ENCODE measurements at regions of chr2 and their contacts with region 1.

Region 1: DNA sequence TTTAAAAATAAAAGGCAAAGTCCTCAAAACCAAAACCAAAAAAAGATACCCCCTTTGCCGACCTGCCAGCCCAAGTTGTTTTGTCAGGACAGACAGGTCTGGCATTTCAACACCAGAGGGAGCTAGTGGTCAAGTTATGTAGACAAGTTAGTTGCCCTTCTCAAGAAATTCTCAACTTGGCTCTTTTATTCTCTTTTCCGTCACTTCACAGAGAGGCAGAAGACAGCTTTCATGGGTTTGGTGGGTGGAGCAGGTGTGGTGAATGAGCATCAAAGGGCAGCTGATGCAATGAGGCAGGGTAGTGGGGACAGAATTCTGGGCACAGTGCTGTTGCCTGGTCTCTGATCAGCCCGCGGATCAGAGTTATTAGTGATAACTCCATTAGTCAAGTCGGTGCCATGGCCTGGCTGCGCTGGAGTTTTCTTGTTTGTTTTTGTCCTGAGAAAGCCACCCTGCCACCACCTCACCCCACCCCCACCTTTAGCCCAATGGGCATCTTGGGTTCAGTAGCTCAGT is 303.7 kb upstream of the EPAS1 start:
- DNase-seq: peak; percentile 89
- ATAC-seq: peak; percentile 73
- H3K4me3 ChIP-seq: no peak overlapping the region
- H3K27ac ChIP-seq: peak overlapping the region; percentile 8; the same call in 1 of the 2 replicates
- H3K4me1 ChIP-seq: peaks cover 19% of the 10 kb centered on the region
- H3K27me3 ChIP-seq: no peaks in the 10 kb centered on the region
- CTCF ChIP-seq: peak; percentile 85
- POLR2A ChIP-seq: no peak
- RAD21 ChIP-seq: peak; percentile 92

Region 2: DNA sequence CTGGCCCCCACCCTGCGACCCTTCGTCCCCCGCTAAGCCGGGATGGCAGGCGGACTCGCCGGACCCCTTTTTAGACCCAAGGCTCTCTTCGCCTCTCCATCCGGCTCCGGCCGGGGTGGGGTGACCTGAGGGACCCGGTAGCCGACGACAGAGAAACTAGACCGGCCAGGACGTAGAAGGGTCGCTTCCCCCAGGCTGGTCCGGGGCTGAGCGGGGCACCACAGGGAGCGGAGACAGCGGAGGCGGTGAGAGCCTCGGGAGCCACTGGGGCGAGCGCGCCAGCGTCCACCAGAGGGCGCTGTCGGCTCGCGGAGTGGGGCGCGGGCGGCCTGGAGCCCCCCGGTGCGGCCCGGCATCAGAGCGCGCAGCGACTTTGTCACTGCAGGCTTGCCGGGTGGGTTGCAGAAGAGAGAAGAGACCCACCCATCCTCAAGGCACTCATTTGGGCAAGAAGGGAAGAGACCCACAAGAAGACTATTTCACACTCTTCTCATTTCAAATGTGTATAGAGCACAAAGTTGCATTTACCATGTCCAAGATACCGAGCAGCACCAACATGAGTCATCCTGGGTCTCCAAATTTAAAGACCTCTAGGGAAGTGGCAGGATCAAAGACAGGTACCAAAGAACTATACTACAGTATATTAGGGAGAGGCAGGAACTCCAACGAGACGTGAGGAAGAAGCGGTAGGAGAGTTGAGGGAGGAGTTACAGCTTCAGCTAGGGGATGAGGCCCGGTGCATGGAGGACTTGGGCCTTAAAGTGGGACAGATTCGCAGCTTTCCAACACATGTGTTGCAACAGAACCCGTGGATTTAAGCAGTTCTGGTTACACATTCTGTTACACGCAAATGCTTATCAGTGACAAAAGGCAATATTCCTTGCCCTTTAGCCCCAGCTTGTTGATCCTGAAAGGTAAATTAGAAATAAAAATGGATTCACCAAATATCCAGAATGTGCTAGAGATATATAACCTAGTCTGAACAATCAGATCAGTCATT is 349.7 kb before region 1 on chr2:
- CTCF ChIA-PET with region 1: no interaction called
- POLR2A ChIA-PET with region 1: no interaction called
- dilution Hi-C with region 1: no loop called
- in situ Hi-C with region 1: no loop called
- intact Hi-C with region 1: loop called (anchors 2 kb)
- DNase-seq: peak; percentile 31
- ATAC-seq: peak; percentile 99
- H3K4me3 ChIP-seq: peak overlapping the region; percentile 67
- H3K27ac ChIP-seq: peak overlapping the region; percentile 50; the same call in 1 of the 2 replicates
- H3K4me1 ChIP-seq: peaks cover 2% of the 10 kb centered on the region; the same call in 1 of the 2 replicates
- H3K27me3 ChIP-seq: peaks cover 34% of the 10 kb centered on the region
- CTCF ChIP-seq: peak; percentile 97
- POLR2A ChIP-seq: 0 out of 2 replicates have a peak, but pooled peaks have one; percentile 42
- RAD21 ChIP-seq: peak; percentile 99

Region 3: DNA sequence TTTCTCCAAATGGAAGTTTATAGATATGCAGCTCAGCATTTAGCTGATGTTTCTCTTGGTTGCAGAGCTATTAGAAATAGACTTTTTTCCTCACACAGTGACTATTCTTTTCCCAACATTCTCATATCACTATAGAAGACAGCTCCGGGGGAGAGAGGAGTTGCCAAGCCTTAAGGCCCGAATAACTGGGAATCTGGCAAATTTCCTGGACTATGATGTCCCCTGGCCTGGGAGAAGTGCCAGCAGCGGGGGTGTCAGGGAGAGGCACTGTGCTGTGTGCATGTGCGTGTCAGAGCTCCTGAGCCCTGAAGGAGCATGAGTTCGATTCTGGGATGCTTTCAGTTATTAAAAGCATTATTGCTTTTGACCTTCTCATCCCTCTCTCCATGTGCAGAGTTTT is 31.0 kb before region 1 on chr2:
- CTCF ChIA-PET with region 1: no interaction called
- POLR2A ChIA-PET with region 1: no interaction called
- dilution Hi-C with region 1: no loop called
- in situ Hi-C with region 1: no loop called
- intact Hi-C with region 1: no loop called
- DNase-seq: peak; percentile 84
- ATAC-seq: peak; percentile 65
- H3K4me3 ChIP-seq: no peak overlapping the region
- H3K27ac ChIP-seq: peak overlapping the region; percentile 32; the same call in 1 of the 2 replicates
- H3K4me1 ChIP-seq: peaks cover 18% of the 10 kb centered on the region
- H3K27me3 ChIP-seq: no peaks in the 10 kb centered on the region
- CTCF ChIP-seq: no peak
- POLR2A ChIP-seq: no peak
- RAD21 ChIP-seq: no peak

Region 4: DNA sequence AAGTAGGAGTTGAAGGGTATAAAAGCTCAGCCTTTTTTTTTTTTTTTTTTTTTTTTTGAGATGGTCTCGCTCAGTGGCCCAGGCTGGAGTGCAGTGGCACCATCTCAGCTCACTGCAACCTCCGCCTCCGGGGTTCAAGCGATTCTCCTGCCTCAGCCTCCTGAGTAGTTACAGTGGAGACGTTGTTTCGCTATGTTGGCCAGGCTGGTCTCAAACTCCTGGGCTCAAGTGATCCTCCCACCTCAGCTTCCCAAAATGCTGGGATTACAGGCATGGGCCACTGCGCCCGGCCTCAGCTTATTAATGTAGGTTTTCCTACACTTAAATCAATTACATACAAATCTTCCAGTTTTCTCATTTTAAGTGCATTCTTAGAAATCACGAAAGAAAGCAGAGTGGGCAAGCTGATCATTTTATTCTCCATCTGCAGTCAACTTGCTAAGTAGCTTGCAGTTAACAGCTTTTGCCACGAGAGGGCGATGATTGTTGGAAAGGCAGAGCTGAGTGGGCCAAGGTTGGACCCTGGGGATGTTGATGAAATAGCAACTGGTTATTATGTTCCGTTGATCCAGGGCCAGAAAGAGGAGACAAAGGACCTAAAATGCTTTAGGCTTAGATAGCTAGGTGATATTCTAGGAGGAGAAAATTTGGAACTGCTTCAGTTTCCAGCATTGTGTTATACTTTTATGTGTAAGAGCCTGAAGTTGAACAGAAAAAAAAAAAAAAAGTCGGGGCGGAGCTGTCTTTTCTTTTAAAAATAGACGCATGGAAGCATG is 69.3 kb after region 1 on chr2:
- CTCF ChIA-PET with region 1: interaction called, 5 read pairs
- POLR2A ChIA-PET with region 1: no interaction called
- dilution Hi-C with region 1: no loop called
- in situ Hi-C with region 1: no loop called
- intact Hi-C with region 1: loop called (anchors 5 kb)
- DNase-seq: peak; percentile 87
- ATAC-seq: peak; percentile 66
- H3K4me3 ChIP-seq: no peak overlapping the region
- H3K27ac ChIP-seq: no peak overlapping the region
- H3K4me1 ChIP-seq: peaks cover 15% of the 10 kb centered on the region
- H3K27me3 ChIP-seq: no peaks in the 10 kb centered on the region
- CTCF ChIP-seq: peak; percentile 82
- POLR2A ChIP-seq: no peak
- RAD21 ChIP-seq: peak; percentile 95

Region 5: GRCh38 chr2:46117379-46117778 is 123.8 kb after region 1 on chr2:
- CTCF ChIA-PET with region 1: no interaction called
- POLR2A ChIA-PET with region 1: no interaction called
- dilution Hi-C with region 1: no loop called
- in situ Hi-C with region 1: no loop called
- intact Hi-C with region 1: no loop called
- DNase-seq: peak; percentile 67
- ATAC-seq: no peak
- H3K4me3 ChIP-seq: no peak overlapping the region
- H3K27ac ChIP-seq: no peak overlapping the region
- H3K4me1 ChIP-seq: peaks cover 16% of the 10 kb centered on the region
- H3K27me3 ChIP-seq: no peaks in the 10 kb centered on the region
- CTCF ChIP-seq: no peak
- POLR2A ChIP-seq: no peak
- RAD21 ChIP-seq: no peak

Measured in IMR-90 (cell line).